Ascending aorta (tissue), 2 donors: ENCODE measurements at regions of chrX and their contacts with region 1.

Region 1: GRCh38 chrX:53224860-53225797 is at the start of gene KDM5C:
- DNase-seq: peak; percentile 64 to 96
- H3K4me3 ChIP-seq: peak within 1 kb of the TSS; percentile 84 to 89
- H3K27ac ChIP-seq: peak within 1 kb of the TSS; percentile 84 to 86
- H3K4me1 ChIP-seq: peaks cover 15 to 26% of the 10 kb centered on the region in 2 donors
- H3K27me3 ChIP-seq: no peaks in the 10 kb centered on the region
- CTCF ChIP-seq: no peak
- total RNA-seq, gene KDM5C: 71.7 TPM

Region 2: DNA sequence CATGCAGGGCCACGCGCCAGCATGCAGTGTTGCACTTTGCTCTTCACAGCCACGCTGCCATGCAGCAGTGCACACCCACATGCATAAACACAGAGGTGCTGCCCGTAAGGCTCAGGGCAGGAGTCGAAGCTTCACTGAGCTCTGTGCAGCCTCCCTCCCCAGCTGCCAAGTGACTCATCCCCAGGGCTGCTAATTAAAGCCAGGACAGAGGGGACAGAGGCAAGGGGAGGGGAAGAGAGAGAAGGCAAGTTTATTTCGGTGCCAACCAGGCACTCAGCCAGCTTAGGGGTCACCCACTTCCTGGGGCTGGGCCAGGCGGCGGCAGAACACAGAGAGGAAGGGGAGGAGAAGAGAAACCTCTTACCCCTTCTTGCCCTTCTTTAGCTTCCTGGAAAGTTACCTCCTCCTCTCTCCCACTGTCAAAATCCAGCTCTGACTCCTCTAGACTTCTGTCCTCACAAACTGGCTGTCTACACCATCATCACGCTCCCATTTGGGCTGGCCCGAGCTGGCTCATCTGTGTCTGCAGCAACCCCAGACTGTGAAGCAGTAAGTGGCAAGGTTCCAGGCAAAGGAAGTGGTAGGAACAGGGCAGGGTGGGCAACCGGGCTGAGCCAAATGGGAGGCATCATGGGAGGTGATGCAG is 62.5 kb after region 1 on chrX:
- intact Hi-C with region 1: no loop called
- DNase-seq: peak; percentile 18 to 81
- H3K4me3 ChIP-seq: no peak overlapping the region
- H3K27ac ChIP-seq: peak overlapping the region; percentile 11 to 61
- H3K4me1 ChIP-seq: peaks cover 4 to 12% of the 10 kb centered on the region in 2 donors
- H3K27me3 ChIP-seq: no peaks in the 10 kb centered on the region
- CTCF ChIP-seq: no peak

Region 3: DNA sequence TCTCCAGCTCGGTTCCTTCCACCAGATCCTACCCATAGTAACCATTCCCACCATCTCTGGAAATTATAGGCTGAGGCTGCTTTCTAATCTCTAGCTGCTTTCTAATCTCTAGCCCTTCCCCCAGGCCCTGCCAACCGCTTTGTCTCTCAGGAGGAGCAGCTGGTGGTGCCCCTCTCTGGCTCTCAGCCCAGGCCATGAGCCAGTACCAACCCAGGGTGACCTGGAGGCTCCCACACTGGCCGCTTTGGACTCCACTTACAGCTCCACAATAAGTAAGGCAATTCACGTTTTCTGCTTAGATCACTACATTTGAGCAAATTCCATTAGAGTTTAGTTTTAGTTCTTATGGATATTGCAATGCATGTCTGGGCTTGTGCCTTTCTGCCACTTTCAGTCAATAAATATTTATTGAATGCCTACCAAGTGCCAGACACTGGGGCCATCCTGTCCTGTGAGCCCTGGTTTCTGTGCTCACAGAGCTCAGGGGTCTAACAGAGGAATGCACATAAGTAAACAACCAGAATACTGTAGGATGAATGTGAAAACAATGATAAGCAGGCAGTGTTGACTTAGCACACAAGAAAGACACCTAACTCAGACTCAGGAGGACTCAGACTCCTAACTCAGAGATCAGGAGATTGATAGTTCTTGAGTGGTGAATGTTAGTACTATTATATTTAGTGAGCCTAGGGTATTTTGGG is 158.4 kb after region 1 on chrX:
- intact Hi-C with region 1: no loop called
- DNase-seq: no peak
- H3K4me3 ChIP-seq: no peak overlapping the region
- H3K27ac ChIP-seq: no peak overlapping the region
- H3K4me1 ChIP-seq: no peaks in the 10 kb centered on the region
- H3K27me3 ChIP-seq: no peaks in the 10 kb centered on the region
- CTCF ChIP-seq: no peak

Region 4: DNA sequence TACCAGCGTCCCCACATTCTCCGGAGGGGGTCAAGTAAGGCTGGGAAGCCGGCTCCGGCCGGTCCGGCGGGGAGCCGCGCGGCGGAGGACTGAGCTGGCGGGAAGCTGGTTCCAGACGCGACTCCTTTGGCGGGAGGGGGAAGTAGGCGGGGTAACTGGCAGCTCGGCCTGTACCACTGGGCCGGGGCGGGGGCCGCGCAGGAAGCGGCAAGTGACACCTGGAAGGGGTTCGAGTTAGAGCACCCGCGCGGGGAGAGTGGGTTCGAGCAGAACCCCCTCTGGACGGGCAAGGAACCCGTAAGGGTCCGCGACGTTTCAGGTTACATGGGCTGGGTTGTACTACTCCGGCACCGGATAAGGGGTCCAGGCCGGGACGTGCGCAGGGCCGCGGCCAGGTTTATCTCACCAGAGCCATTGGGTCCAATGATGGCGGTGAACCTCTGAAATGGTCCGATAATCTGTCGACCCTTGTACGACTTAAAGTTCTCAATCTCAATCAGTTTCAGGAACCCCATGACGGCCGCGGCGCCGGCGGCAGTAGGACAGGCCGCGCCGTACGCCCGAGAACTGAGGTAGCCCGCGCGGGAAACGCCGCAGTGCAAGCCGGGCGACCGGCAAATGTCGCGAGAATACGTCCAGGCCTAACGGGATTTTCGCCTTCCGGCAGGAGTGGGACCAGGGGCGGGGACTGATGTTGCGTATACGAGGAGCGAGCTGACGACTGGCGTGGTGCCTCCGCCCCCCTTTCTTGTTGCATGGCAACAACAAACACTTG is 197.1 kb after region 1 on chrX and contains the start of gene SMC1A:
- intact Hi-C with region 1: loop called (anchors 1 kb)
- DNase-seq: peak; percentile 93 to 99
- H3K4me3 ChIP-seq: peak within 1 kb of the TSS; percentile 73 to 85
- H3K27ac ChIP-seq: peak within 1 kb of the TSS; percentile 91 to 92
- H3K4me1 ChIP-seq: peaks cover 5 to 10% of the 10 kb centered on the region in 2 donors
- H3K27me3 ChIP-seq: no peaks in the 10 kb centered on the region
- CTCF ChIP-seq: no peak
- total RNA-seq, gene SMC1A: 11.2 TPM

Region 5: DNA sequence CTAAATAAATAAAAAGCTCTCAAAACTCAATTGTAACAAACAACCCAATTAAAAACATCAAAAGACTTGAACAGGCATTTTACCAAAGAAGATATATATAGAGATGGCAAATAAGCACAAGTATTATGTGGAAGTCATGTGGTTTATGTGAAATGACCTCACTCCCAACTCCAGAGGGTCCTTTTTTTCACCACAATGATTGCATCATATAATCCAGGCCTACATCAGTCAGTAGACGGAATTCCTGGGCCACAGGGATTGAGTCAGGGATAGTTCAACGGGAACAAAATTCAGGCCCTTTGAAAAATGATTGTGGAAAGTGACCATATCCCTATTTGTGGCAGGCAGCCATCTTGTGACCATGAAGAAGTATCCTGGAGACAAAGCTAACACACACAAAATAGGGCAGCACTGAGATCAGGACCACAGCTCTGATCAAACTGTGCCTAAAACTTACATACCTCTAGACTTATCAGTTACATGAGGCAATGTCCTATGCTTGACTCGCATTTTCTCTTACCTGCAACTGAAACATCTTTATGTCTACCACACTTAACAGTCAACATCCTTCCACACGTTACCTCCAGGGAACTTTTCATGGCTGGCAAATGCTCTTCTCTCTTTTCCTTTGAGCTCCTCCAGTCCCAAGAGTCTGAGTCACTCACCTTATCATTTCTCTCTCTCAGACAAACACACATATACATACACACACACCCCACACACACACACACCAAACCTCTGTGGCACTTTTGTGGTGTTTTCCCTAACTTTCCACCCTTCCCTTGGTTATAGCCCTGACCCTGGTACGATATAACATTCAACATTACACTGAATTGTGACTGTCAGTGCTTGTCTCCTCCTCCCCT is 705.6 kb after region 1 on chrX:
- intact Hi-C with region 1: no loop called
- DNase-seq: no peak
- H3K4me3 ChIP-seq: no peak overlapping the region
- H3K27ac ChIP-seq: no peak overlapping the region
- H3K4me1 ChIP-seq: no peaks in the 10 kb centered on the region
- H3K27me3 ChIP-seq: no peaks in the 10 kb centered on the region
- CTCF ChIP-seq: no peak